ENCODE measurements at regions of chr12 and their contacts with region 1.

Region 1: GRCh38 chr12:107607464-107608392 is 77.9 kb upstream of the PWP1 start:
- DNase-seq: peak; percentile 77
- H3K4me3 Mint-ChIP-seq: no peak overlapping the region
- H3K27ac Mint-ChIP-seq: no peak overlapping the region
- H3K4me1 Mint-ChIP-seq: no peaks in the 10 kb centered on the region
- H3K27me3 Mint-ChIP-seq: no peaks in the 10 kb centered on the region
- CTCF ChIP-seq: peak; percentile 89

Region 2: DNA sequence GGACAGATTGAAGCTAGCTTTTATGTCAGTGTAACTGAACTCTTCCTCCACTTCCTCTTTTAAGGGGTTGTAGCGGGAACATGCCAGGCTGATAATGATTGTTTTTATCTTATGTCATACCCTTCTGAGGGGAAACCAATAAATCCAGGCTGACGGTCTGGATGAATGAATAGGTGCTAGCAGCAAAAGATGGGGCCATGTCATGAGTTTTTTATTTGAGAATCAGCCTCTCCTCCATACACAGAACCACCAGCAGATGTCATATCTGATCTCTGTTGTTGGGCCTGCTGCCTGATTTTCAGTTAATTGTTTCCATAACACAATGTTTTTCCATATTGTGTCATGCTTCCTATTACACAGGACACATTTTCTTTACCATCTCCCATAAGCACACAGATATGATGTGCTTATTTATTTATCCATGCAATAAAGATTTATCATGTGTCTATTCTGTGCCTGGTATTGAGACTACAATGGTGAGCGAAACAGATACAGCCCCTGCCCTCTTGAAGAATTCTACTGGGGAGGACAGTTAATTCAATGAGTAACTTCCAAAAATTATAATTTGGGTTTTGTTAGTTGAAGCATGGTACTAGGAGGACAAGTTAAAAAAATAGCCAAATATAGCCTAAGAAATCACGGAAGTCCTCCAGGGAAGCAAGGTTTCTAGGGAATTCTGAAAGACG is 480.8 kb before region 1 on chr12:
- CTCF ChIA-PET with region 1: interaction called, 516 read pairs
- POLR2A ChIA-PET with region 1: interaction called, 5 read pairs
- intact Hi-C with region 1: loop called (anchors 1 kb)
- DNase-seq: peak; percentile 28
- H3K4me3 Mint-ChIP-seq: no peak overlapping the region
- H3K27ac Mint-ChIP-seq: no peak overlapping the region
- H3K4me1 Mint-ChIP-seq: no peaks in the 10 kb centered on the region
- H3K27me3 Mint-ChIP-seq: peaks cover 11% of the 10 kb centered on the region
- CTCF ChIP-seq: peak; percentile 31

Region 3: DNA sequence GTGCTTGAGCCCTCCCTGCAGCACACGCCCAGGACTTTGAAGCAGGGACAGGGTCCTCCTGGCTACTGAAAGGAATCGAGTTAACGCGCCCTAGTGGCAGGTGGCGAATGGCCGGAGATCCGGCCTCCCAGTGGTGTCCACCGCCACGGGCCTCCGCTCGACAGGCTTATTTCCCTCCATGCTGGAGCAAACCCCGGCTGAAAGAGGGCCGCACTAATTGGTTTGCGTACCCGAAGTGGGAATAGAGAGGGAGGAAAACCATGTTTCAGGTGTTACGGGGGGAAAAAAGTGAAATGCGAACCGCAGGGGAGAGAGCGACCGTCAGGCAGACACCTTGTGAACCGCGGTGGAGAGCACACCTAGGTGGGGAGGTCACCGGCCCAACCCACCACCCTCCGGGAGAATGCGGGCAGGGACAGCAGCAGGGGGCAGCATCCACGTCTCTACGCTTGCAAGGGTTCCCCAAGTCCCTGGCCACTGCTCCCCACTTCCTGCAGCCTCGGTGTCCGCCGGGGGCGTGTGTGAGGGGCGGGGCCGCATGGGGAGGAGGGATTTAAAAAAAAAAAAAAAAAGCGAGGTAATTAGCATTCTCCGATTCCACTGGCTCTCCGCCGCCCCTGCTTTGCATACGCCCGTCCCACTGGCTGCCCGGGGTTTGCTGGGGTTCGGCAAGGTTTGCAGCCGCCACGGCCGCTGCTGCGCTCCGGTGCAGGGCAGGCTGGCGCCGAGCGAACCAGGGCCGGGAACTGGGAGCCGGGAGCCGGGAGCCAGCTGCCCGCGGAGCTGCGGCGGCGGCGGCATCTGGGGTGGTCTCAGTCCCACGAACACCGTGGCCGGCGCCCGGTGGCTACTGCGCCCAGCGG is 289.7 kb before region 1 on chr12:
- CTCF ChIA-PET with region 1: interaction called, 5 read pairs
- POLR2A ChIA-PET with region 1: no interaction called
- intact Hi-C with region 1: loop called (anchors 5 kb)
- DNase-seq: peak; percentile 92
- H3K4me3 Mint-ChIP-seq: peak overlapping the region; percentile 77
- H3K27ac Mint-ChIP-seq: no peak overlapping the region
- H3K4me1 Mint-ChIP-seq: peaks cover 5% of the 10 kb centered on the region
- H3K27me3 Mint-ChIP-seq: peaks cover 54% of the 10 kb centered on the region
- CTCF ChIP-seq: peak; percentile 14

Region 4: DNA sequence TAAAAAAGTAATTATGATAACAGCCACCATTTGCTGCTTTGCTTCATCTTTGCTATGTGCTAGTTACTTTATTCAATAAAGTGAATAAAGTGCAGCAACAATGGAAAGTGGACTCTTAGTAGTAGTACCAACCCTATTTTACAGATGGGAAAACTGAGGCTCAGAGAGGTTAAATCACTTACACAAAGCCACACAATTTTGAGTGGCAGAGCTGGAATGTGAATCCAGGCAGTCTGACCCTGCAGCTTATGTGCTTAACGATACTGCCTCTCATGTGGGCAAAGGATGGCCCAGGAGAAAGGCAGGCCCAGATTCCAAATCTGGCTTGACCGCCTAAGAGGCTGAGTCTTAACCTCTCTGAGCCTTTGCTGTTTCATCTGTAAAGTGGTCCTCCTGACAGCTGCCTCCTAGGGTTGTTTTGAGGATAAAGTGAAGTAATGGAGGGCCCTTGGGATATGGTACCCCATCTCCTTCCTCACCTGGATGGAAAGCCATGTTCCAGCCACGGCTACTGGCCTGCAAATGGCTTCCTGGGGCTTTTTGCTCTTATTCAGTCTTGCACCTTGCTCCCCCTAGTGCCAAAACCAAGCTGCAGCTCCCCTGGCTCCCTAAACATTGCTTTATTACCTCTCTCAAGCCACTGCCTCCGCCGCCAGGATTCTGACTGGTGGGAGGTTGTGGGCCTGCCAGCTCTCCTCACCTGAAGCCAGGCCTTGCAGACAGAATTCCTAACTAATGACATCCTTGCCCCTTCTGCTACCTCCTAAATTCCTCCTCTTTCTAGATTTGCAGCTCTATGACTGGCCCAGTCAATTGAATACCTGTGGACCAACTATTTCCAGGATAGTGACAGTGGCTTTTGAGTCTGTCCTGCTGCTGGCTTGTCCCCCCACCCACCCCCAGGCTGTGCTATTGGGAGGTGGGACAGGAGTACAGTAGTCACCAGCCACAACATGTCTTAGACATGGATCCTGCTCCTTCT is 205.4 kb before region 1 on chr12:
- CTCF ChIA-PET with region 1: interaction called, 37 read pairs
- POLR2A ChIA-PET with region 1: no interaction called
- intact Hi-C with region 1: loop called (anchors 1 kb)
- DNase-seq: peak; percentile 81
- H3K4me3 Mint-ChIP-seq: no peak overlapping the region
- H3K27ac Mint-ChIP-seq: no peak overlapping the region
- H3K4me1 Mint-ChIP-seq: no peaks in the 10 kb centered on the region
- H3K27me3 Mint-ChIP-seq: no peaks in the 10 kb centered on the region
- CTCF ChIP-seq: peak; percentile 74

Region 5: GRCh38 chr12:107448198-107448597 is 159.5 kb before region 1 on chr12:
- CTCF ChIA-PET with region 1: interaction called, 3 read pairs
- POLR2A ChIA-PET with region 1: no interaction called
- intact Hi-C with region 1: loop called (anchors 5 kb)
- DNase-seq: peak; percentile 35
- H3K4me3 Mint-ChIP-seq: no peak overlapping the region
- H3K27ac Mint-ChIP-seq: no peak overlapping the region
- H3K4me1 Mint-ChIP-seq: no peaks in the 10 kb centered on the region
- H3K27me3 Mint-ChIP-seq: no peaks in the 10 kb centered on the region
- CTCF ChIP-seq: no peak

Region 6: GRCh38 chr12:107622005-107622404 is 14.3 kb after region 1 on chr12:
- CTCF ChIA-PET with region 1: interaction called, 79 read pairs
- POLR2A ChIA-PET with region 1: no interaction called
- intact Hi-C with region 1: no loop called
- DNase-seq: peak; percentile 25
- H3K4me3 Mint-ChIP-seq: no peak overlapping the region
- H3K27ac Mint-ChIP-seq: no peak overlapping the region
- H3K4me1 Mint-ChIP-seq: no peaks in the 10 kb centered on the region
- H3K27me3 Mint-ChIP-seq: no peaks in the 10 kb centered on the region
- CTCF ChIP-seq: peak; percentile 26